Heart left ventricle (tissue), 16 donors: ENCODE measurements at regions of chr10 and their contacts with region 1.

Region 1: DNA sequence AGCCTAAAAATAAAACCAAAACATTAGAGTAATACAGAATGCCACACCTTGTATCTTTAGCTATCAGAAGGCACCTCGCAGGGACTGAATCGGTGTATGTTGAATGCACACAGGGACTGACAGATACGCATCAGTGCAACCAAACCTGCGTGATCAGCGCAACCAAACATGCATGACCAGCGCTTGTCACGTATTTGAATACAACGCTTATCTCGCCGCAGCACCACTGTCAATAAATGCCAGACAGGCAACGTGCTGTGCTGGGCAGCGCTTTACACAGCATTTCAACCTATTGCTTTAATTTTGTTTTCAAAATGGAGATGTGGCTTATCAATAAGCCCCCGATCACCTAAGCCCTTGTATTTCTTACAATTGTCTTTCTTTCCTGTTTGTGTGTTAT is 242.4 kb downstream of the SFMBT2 start:
- DNase-seq: no peak
- ATAC-seq: no peak
- H3K4me3 ChIP-seq: no peak overlapping the region
- H3K27ac ChIP-seq: no peak overlapping the region
- H3K4me1 ChIP-seq: peaks cover 0 to 8% (median 0%) of the 10 kb centered on the region in 12 donors
- H3K27me3 ChIP-seq: no peaks in the 10 kb centered on the region
- CTCF ChIP-seq: no peak
- POLR2A ChIP-seq: no peak

Region 2: DNA sequence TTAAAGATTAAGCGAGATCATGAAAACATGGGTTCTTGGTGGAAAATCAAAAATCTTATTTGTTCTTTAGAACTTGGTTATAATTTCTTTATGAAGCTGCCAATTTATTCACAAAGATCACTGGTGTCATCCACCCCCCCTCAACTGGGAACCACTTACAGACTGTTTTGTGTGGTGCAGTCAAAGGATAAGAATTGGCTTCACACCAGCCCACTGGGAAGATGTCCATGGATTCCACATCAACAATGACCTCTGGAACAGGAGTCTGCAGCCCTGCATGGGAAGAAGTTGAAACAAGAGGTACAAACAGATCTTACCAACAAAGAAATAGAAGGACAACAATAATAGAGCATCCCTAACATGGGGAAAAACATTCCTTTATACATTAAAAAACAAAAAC is 37.2 kb after region 1 on chr10:
- intact Hi-C with region 1: loop called in 1 of 10 experiments (anchors 5 kb)
- DNase-seq: peak in 4 of 5 donors; percentile 45 to 58 (median 52)
- ATAC-seq: peak; percentile 91 to 96 (median 93)
- H3K4me3 ChIP-seq: no peak overlapping the region
- H3K27ac ChIP-seq: peak overlapping the region in 4 of 12 donors; percentile 9 to 61 (median 37)
- H3K4me1 ChIP-seq: peaks cover 0 to 9% (median 0%) of the 10 kb centered on the region in 12 donors
- H3K27me3 ChIP-seq: no peaks in the 10 kb centered on the region
- CTCF ChIP-seq: no peak
- POLR2A ChIP-seq: no peak